BJ (cell line): ENCODE measurements at regions of chr1 and their contacts with region 1.

Region 1: DNA sequence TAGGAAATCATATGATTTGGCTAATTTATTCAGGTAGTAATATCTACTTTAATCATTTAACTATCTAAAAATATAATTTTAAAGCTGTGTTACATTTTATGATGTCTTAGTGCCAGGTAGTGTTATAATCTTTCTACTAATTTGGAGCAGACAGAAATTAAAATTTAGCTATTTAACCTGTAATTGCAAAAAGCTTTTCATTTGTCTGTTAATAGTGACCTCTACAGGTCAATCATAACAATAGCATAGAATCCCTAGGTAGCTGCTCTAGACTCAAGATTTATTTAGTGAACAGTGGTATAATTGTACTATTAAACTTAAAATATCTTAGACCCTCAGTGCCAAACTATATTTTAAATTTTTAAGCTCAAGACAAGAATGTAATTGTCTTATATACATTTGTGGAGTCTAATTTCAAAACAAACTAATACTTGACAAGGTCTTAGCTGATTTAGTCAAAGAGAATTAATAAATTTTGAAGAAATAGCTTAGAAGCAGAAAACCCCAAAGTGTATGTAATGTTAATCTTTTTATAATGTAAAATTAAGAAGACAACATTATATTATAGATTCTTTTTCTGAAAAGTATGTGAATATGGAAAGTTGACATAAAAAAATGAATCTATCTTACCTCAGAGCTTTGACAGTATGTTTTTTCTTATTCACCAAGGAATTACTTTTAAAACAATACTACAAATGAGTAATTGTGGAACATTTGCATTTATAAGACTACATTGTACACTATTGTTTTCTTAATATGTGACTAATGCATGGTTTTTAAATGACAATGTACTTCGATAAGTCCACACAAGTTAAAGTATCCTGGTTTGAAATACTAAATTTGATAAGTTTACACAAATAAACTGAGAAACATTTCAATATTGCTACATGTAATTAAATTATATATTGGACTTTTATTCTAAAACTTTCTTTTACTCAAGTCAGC is 64.1 kb upstream of the RNPC3 start:
- DNase-seq: no peak
- H3K4me3 ChIP-seq: no peak overlapping the region
- H3K27me3 ChIP-seq: no peaks in the 10 kb centered on the region
- CTCF ChIP-seq: peak; percentile 55

Region 2: GRCh38 chr1:103101399-103101798 is 360.0 kb before region 1 on chr1:
- CTCF ChIA-PET with region 1: interaction called, 47 read pairs
- POLR2A ChIA-PET with region 1: no interaction called
- DNase-seq: no peak
- H3K4me3 ChIP-seq: no peak overlapping the region
- H3K27me3 ChIP-seq: no peaks in the 10 kb centered on the region
- CTCF ChIP-seq: no peak

Region 3: GRCh38 chr1:103106426-103107341 is 354.7 kb before region 1 on chr1:
- CTCF ChIA-PET with region 1: interaction called, 47 read pairs
- POLR2A ChIA-PET with region 1: no interaction called
- DNase-seq: no peak
- H3K4me3 ChIP-seq: peak overlapping the region; percentile 65
- H3K27me3 ChIP-seq: no peaks in the 10 kb centered on the region
- CTCF ChIP-seq: peak; percentile 60